ENCODE measurements at regions of chr21 and their contacts with region 1.

Region 1: DNA sequence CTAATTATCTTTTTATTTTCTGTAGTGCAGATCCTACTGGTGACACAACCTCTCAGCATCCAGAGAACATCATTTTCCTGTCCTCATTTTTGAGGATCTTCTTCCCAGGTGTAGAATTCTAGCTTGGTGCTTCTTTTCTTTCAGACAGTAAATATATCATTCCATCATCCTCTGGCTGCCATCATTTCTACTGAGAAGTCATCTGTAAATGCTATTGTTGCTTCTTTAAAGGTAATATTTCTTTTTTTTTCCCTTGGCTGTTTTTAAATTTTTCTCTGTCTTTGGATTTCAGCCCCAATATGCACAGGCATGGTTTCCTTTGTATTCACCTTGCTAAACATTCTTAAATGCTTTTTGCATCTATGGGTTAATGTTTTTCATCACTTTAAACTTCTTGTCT is 3.3 kb upstream of the KRTAP10-9 start:
- DNase-seq: no peak
- ATAC-seq: no peak
- H3K4me3 ChIP-seq: no peak overlapping the region
- H3K27ac ChIP-seq: no peak overlapping the region
- H3K4me1 ChIP-seq: no peaks in the 10 kb centered on the region
- H3K27me3 ChIP-seq: peaks cover 0 to 9% (median 0%) of the 10 kb centered on the region in 3 donors
- CTCF ChIP-seq: no peak

Region 2: DNA sequence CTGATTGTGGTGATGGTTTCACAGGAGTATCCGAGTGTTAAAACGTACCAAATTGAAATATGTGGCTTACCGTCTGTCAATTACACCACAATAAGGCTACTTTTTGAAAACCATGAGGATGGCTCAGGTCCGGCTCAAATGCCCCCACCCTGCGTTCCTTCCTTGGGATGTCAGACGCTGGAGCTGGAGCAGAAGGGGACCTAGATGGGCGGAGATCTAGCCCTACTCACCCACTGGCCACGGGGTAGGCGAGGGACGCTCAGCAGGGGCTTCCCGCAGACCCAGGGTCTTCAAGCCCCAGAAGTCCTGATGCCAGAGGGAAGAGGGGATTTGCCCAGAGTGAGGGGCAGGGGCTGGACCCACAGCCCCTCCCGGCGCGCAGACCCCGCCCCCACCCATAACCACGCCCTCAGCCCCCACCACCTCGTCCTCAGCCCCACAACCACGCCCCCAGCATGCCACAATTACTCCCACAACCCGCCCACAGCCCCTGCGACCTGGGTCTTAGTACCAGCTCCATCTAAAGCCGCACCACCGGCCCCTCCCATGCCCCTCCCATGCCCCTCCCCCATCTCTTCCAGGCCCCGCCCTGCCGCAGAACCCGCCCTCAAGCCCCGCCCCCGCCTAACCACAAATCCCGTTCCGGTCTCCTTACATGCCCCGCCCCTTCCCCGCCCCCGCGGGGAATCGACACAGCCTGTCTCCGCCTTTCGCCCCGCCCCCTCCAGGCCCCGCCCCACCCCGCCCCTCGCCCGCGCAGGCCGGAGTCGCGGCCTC is 168.6 kb before region 1 on chr21 and contains the start of gene LRRC3:
- intact Hi-C with region 1: no loop called
- DNase-seq: peak; percentile 88
- ATAC-seq: peak; percentile 44 to 70 (median 68)
- H3K4me3 ChIP-seq: peak within 1 kb of the TSS; percentile 63
- H3K27ac ChIP-seq: no peak within 1 kb of the TSS
- H3K4me1 ChIP-seq: no peaks in the 10 kb centered on the region
- H3K27me3 ChIP-seq: peaks cover 0 to 34% (median 10%) of the 10 kb centered on the region in 3 donors
- CTCF ChIP-seq: no peak
- total RNA-seq, gene LRRC3: 0.13 to 1.1 (median 0.23) TPM

Region 3: GRCh38 chr21:44485254-44485793 is 138.3 kb before region 1 on chr21:
- intact Hi-C with region 1: no loop called
- DNase-seq: peak in 1 of 2 donors; percentile 74
- ATAC-seq: no peak
- H3K4me3 ChIP-seq: peak overlapping the region; percentile 15
- H3K27ac ChIP-seq: no peak overlapping the region
- H3K4me1 ChIP-seq: no peaks in the 10 kb centered on the region
- H3K27me3 ChIP-seq: peaks cover 0 to 13% (median 2%) of the 10 kb centered on the region in 3 donors
- CTCF ChIP-seq: no peak

Region 4: DNA sequence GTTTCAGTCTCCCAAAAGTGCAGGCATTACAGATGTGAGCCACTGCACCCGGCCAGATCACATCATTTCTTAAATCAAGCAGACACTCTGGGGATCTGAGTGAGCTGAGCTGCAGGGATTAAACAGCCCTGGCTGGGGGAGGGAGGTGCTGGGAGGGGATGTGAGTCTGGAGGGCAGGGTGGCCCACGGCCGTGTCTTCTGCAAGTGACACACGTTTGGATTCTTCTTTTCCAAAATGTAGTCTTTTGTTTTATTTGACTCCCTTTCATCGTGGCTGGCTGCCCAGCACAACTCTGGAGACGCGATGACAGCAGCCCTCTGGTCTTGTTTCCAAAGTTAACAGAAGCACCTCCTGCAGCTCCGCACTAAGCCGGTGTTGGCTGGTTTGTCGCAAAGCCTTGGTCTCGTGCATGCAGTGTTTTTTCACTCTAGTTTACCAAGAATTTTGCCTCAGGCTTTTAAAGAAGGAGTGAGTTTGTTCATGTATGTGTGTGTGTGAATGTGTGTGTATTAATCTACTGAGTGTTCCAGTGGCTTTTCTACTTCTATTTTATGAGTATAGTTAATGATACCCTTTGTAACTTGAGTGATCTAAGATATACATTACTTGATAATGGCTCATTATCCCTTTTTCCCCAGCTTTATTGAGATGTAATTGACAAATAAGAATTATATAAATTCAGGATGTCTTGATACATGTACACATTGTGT is 40.3 kb before region 1 on chr21:
- intact Hi-C with region 1: no loop called
- DNase-seq: no peak
- ATAC-seq: no peak
- H3K4me3 ChIP-seq: no peak overlapping the region
- H3K27ac ChIP-seq: no peak overlapping the region
- H3K4me1 ChIP-seq: no peaks in the 10 kb centered on the region
- H3K27me3 ChIP-seq: peaks cover 7 to 45% (median 13%) of the 10 kb centered on the region in 3 donors
- CTCF ChIP-seq: no peak

Region 5: DNA sequence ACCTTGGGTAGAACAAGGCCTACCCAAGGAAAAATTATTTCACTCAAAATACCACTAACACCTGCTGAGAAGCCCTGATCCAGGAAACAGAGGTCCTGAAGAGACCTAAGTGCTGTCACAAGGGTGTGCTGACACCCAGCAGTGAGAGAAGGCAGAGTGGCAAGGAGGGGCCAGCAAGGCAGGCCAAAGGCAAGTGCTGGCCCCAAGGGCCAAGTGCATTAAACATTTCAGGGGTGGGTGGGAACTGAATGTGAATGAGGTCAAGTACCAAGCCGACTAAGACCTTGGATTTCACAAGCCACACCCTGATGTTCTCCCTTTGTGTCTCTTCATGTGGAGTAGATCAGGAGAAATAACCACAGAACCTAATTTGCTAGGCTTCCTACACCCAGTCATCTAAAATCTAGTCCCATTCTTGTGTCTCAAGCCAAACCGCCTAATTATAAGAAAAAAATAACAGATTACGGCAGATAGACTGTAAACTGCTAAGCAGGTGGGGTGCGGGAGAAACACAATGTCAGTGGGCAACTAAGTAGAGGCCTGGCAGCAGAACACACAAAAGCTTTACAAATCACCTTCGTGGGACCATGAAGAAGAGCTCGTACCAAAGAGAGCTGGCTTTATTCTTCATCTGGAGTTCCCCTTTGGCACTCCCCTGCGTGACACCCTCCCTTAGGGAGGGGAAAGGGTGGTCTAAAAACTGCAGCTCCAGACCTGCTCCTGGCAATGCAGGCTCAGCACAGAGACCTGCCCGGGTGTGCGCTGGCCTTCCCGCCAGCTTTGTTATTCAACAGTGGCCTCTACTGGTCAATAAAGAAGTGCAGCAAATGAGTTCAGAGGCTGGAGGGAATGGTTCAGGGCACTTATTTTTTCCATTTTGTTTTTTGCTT is 169.4 kb after region 1 on chr21:
- intact Hi-C with region 1: loop called in 1 of 2 experiments (anchors 5 kb)
- DNase-seq: peak; percentile 42 to 64
- ATAC-seq: peak; percentile 83 to 93 (median 88)
- H3K4me3 ChIP-seq: no peak overlapping the region
- H3K27ac ChIP-seq: no peak overlapping the region
- H3K4me1 ChIP-seq: peaks cover 30% of the 10 kb centered on the region
- H3K27me3 ChIP-seq: no peaks in the 10 kb centered on the region
- CTCF ChIP-seq: peak; percentile 76

Measured in psoas muscle (tissue), 8 donors.